A549 (cell line): ENCODE measurements at regions of chr6 and their contacts with region 1.

Region 1: GRCh38 chr6:37169496-37170272 is at the start of gene PIM1:
- DNase-seq: peak; percentile 85 to 96
- ATAC-seq: peak; percentile 77
- H3K4me3 ChIP-seq: peak within 1 kb of the TSS; percentile 92
- H3K27ac ChIP-seq: peak within 1 kb of the TSS; percentile 94 to 97
- H3K4me1 ChIP-seq: peaks cover 21% of the 10 kb centered on the region
- CTCF ChIP-seq: no peak
- EP300 ChIP-seq: no peak
- POLR2A ChIP-seq: peak; percentile 56
- RAD21 ChIP-seq: 0 out of 5 replicates have a peak, but pooled peaks of 1 of the 2 experiments have one; percentile 7
- polyA plus RNA-seq, gene PIM1: 19.0 and 21.9 TPM in 2 replicates

Region 2: DNA sequence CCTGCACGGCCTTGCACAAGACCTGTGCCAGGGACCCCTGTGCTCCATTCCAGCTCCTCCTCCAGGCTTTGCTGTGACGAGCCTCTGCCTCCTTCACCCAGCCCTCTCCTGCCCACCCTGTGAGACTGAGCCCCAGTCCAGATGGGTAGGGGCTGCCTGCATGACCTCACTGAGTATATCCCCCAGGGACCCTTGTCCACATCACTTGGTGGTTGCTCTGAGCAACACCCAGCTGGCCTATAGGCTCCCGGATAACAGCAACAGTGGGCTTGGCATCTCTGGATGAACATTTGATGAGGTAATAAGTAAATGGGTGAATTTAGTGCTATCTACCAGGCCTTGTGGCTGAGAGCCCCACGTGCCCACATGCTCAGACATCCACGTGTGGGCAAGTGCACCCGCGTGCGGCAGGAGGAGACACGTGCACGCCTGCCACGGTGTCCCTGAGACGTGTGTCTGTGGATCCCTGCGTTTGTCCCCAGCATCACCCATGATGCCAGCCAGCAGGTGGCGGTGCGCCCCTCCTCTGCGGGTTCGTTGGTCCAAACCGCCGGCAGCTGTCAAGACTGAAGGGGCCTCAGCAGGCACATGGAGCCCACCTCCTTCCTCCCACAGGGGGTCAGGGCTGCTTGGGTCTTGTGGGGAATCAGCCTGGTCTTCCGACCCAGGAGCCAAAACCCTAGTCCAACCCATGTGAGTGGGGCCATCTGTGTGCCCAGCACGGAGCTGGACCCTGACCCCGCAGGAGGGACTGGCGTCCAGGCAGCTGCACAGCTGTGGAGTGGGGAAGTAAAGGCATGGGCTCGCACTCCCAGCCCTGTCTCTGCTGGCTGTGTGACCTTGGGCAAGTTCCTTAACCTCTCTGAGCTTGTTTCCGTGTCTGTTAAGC is 118.3 kb before region 1 on chr6:
- CTCF ChIA-PET with region 1: interaction called, 449 read pairs
- POLR2A ChIA-PET with region 1: interaction called, 6 read pairs
- DNase-seq: peak; percentile 76 to 78
- ATAC-seq: peak; percentile 82 to 89
- H3K4me3 ChIP-seq: no peak overlapping the region
- H3K27ac ChIP-seq: peak overlapping the region; percentile 65 to 74
- H3K4me1 ChIP-seq: peaks cover 32% of the 10 kb centered on the region
- CTCF ChIP-seq: peak; percentile 80
- EP300 ChIP-seq: no peak
- POLR2A ChIP-seq: no peak
- RAD21 ChIP-seq: peak; percentile 95 to 96

Region 3: DNA sequence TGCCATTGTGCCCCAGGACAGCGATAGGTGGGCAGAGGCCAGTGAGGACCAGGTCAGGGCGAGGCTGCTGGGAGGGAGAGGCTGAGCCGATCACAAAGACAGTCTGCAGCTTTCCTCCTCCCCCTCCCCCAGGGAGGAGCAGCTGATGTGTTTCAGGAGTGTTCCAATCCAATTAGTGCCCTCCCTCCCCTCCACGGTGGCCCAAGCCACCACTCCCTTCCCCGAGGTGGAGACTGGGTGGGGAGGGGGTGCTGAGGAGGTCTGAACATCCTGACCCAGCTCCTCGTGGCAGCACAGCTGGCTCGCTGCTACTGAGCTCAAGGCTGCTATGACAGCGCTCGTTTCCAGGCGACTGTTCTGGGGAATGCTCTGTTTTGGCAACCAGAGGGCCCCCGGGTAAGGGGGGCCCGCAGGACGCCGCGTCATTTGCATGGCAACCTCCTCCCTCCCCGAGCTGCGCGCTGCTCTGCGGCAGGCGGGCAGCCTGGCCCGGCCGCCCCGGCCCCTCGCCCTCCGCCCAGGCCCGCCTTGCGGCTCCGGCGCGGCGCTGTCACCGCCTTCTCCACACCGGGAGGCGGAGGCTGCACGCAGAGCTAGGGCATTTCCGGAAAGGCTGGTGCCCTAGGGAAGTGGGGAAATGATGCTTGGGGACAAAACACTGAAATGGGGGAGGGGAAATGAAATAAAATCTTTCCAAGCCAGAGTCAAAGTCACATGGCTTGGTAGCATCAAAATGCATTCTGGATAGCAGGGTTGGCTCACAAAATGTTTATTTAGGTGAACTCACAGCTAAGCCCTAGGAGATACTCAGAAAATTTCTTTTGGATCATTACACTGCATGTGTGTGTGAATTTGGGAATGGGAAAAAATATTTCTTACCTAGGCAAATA is 67.2 kb before region 1 on chr6:
- CTCF ChIA-PET with region 1: interaction called, 5 read pairs
- POLR2A ChIA-PET with region 1: interaction called, 32 read pairs
- DNase-seq: peak; percentile 48 to 82
- ATAC-seq: peak; percentile 90
- H3K4me3 ChIP-seq: peak overlapping the region; percentile 30
- H3K27ac ChIP-seq: peak overlapping the region; percentile 72 to 89
- H3K4me1 ChIP-seq: peaks cover 44% of the 10 kb centered on the region
- CTCF ChIP-seq: no peak; the same call in 2 of the 3 replicates
- EP300 ChIP-seq: peak in 1 of 2 experiments; percentile 17; a peak in 1 of 5 replicates
- POLR2A ChIP-seq: peak; percentile 34; the same call in 1 of the 2 replicates
- RAD21 ChIP-seq: peak in 1 of 2 experiments; percentile 17; a peak in 1 of 5 replicates

Region 4: GRCh38 chr6:37137201-37138090 is 32.2 kb before region 1 on chr6:
- CTCF ChIA-PET with region 1: interaction called, 64 read pairs
- POLR2A ChIA-PET with region 1: interaction called, 24 read pairs
- DNase-seq: peak; percentile 85 to 94
- ATAC-seq: peak; percentile 68 to 76
- H3K4me3 ChIP-seq: peak overlapping the region; percentile 32
- H3K27ac ChIP-seq: peak overlapping the region; percentile 93 to 96
- H3K4me1 ChIP-seq: peaks cover 82% of the 10 kb centered on the region
- CTCF ChIP-seq: no peak
- EP300 ChIP-seq: peak; percentile 47 to 60; a peak in 2 of 5 replicates
- POLR2A ChIP-seq: no peak
- RAD21 ChIP-seq: no peak; a peak in 2 of 5 replicates

Region 5: DNA sequence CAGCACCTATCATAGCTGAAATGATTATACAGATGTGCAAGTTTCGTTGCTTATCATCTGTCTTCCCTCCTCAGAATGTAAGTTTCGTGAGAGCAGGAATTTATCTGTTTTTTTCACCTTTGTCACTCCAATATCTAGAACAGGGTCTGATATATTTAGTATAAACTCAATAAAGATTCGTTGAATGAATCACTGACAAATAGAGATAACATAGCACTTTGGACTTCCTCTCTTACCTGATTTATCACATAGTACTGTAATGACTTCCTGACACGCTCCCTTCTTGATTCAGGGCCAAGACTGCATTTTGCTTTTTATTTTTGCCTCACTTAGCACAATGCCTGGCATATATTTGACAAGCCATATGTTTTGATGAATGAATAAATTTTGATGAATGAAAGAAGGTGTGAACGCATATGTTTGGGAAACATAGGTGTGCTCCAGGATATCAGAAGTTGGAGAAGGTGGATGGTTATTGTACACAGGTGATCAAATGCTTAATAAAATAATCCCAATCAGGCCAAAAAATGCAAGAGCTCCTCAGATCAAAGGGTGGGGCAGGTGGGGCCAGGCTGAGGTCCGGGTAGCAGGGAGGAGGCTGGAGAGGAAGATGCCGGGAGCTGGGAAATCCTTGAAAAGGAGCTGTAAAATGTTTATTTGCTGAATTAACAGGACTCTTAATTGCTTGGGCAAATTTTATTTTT is 33.3 kb after region 1 on chr6:
- CTCF ChIA-PET with region 1: interaction called, 47 read pairs
- POLR2A ChIA-PET with region 1: no interaction called
- DNase-seq: no peak
- ATAC-seq: no peak
- H3K4me3 ChIP-seq: no peak overlapping the region
- H3K27ac ChIP-seq: no peak overlapping the region
- H3K4me1 ChIP-seq: peaks cover 27% of the 10 kb centered on the region
- CTCF ChIP-seq: no peak
- EP300 ChIP-seq: no peak
- POLR2A ChIP-seq: no peak
- RAD21 ChIP-seq: no peak

Region 6: GRCh38 chr6:37332894-37333293 is 163.2 kb after region 1 on chr6:
- CTCF ChIA-PET with region 1: no interaction called
- POLR2A ChIA-PET with region 1: no interaction called
- DNase-seq: no peak
- ATAC-seq: no peak
- H3K4me3 ChIP-seq: no peak overlapping the region
- H3K27ac ChIP-seq: no peak overlapping the region
- H3K4me1 ChIP-seq: no peaks in the 10 kb centered on the region
- CTCF ChIP-seq: no peak
- EP300 ChIP-seq: no peak
- POLR2A ChIP-seq: no peak
- RAD21 ChIP-seq: no peak